Activated B cell treated with CpG ODN at 0.5 μM for 24 hours (primary cell): ENCODE measurements at regions of chr6 and their contacts with region 1.

Region 1: DNA sequence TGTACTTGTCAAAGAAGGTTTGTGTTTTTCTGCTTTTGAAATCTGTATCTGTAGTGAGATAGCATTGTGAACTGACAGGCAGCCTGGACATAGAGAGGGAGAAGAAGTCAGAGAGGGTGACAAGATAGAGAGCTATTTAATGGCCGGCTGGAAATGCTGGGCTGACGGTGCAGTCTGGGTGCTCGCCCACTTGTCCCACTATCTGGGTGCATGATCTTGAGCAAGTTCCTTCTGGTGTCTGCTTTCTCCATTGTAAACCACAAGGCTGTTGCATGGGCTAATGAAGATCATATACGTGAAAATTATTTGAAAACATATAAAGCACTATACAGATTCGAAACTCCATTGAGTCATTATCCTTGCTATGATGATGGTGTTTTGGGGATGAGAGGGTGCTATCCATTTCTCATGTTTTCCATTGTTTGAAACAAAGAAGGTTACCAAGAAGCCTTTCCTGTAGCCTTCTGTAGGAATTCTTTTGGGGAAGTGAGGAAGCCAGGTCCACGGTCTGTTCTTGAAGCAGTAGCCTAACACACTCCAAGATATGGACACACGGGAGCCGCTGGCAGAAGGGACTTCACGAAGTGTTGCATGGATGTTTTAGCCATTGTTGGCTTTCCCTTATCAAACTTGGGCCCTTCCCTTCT is 18.4 kb downstream of the CD83 start:
- DNase-seq: no peak
- ATAC-seq: no peak
- H3K4me3 Mint-ChIP-seq: no peak overlapping the region
- H3K27ac Mint-ChIP-seq: peak overlapping the region; percentile 73
- H3K4me1 Mint-ChIP-seq: peaks cover 65% of the 10 kb centered on the region
- H3K27me3 Mint-ChIP-seq: no peaks in the 10 kb centered on the region
- CTCF ChIP-seq: no peak

Region 2: DNA sequence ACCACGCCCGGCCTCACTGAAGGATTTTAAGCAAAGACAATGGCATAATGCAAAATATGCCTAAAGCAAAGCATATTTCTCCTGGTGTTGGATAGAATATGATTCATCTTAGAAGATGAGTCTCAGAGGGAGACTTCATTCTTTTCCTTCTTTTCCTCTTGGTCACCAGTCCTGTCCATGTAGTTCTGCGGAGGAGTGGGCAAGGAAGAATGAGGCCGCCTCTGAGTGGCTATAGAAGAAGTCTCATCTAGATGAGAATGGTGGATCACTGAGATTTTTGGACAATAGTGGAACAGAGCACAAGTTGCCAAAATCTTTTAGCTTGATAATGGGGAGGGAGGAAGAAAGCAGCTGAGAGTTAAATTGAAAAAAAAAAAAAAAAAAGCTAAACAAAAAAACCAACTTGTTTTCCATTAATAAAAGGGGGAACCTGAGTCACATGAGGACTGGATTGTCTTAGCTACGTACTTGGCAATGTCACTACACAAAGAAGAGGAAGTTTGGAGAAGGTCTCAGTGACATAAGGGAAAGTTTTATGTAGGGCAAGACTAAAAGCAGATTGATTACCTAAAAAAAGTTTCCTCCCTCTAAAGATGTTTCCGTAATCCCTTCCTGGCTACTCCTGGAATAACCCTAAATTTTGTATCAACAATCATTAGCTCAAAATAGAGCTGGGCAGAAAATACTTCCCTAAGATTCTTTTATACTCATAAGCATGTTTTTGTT is 12.5 kb before region 1 on chr6:
- CTCF ChIA-PET with region 1: interaction called, 3 read pairs
- POLR2A ChIA-PET with region 1: interaction called, 52 read pairs
- intact Hi-C with region 1: no loop called
- DNase-seq: no peak
- ATAC-seq: no peak
- H3K4me3 Mint-ChIP-seq: peak overlapping the region; percentile 95
- H3K27ac Mint-ChIP-seq: peak overlapping the region; percentile 94
- H3K4me1 Mint-ChIP-seq: peaks cover 84% of the 10 kb centered on the region
- H3K27me3 Mint-ChIP-seq: no peaks in the 10 kb centered on the region
- CTCF ChIP-seq: no peak